ENCODE measurements at regions of chr14 and their contacts with region 1.

Region 1: GRCh38 chr14:21557084-21557901 is 22.6 kb downstream of the OR10G3 start:
- DNase-seq: peak; percentile 80 to 90
- H3K4me3 ChIP-seq: no peak overlapping the region
- CTCF ChIP-seq: no peak
- POLR2A ChIP-seq: no peak

Region 2: GRCh38 chr14:21300892-21301291 is 256.4 kb before region 1 on chr14:
- intact Hi-C with region 1: no loop called
- DNase-seq: no peak
- H3K4me3 ChIP-seq: no peak overlapping the region
- CTCF ChIP-seq: no peak
- POLR2A ChIP-seq: no peak

Region 3: DNA sequence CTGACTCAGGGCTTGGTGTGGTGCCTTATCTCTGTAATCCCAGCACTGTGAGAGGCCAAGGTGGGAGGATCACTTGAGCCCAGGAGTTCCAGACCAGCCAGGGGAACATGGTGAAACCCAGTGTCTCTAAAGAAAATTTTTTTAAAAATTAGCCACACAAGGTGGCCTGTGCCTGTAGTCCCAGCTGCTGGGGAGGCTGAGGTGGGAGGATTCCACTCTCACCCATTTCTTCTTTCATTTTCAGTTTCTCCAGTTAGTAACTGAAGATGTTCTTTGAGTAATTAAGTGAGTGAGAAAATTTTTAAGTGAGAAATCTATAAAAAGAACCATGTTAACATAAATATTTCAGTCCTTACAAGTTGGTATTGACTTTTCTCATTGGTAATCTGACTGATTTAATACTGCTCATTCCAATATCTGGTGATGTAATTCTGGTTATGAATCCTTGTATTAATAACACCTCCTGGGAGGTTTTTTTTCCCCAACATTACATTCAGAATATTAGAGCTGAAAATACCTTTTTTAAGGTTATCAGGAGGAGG is 52.2 kb before region 1 on chr14:
- intact Hi-C with region 1: loop called (anchors 10 kb)
- DNase-seq: no peak
- H3K4me3 ChIP-seq: no peak overlapping the region
- CTCF ChIP-seq: no peak
- POLR2A ChIP-seq: no peak

Measured in lower leg skin (tissue), 4 donors.